Aorta (tissue), 5 donors: ENCODE measurements at regions of chr19 and their contacts with region 1.

Region 1: GRCh38 chr19:44304659-44305193 is at the start of gene ZNF235:
- DNase-seq: peak; percentile 95 to 96
- ATAC-seq: peak; percentile 99
- H3K4me3 ChIP-seq: peak within 1 kb of the TSS; percentile 62 to 76
- H3K27ac ChIP-seq: peak within 1 kb of the TSS in 1 of 2 donors; percentile 65
- H3K4me1 ChIP-seq: no peaks in the 10 kb centered on the region
- H3K27me3 ChIP-seq: no peaks in the 10 kb centered on the region
- total RNA-seq, gene ZNF235: 6.2 to 11.0 TPM

Region 2: DNA sequence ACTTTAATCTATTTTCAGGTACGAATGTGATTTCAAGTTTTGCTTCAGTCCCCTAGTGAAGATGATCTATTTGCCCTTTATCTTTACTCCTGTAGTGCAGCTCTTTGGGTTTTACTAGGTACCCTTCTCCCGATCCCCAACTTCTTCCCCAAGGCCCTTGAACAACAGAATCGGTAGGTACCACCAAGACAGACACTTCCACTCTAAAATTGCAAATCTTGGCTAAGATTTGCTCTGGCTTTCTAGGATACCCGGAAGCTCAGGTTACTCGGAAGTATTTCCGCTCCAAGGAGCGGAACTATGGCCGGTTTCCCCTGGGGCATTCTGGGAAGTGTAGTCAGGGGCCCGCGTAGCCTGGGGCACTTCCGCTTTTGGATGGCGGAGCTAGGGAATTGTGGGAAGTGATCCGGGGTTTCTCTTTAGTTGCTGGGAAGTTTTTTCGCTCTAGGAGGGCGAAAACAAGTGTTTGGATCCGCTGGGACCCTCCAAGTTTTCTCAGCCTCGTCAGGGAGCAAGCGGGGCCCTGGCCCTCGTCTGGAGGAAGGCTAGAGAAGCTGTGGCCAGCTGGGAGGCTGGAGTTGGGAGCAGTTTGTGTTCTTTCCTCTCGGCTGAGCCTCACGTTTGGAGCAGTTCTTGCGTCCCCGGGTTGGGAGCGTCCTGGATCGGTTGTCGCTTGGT is 97.5 kb before region 1 on chr19:
- intact Hi-C with region 1: loop called in 1 of 2 experiments (anchors 5 kb)
- DNase-seq: peak; percentile 92 to 93
- ATAC-seq: peak; percentile 96
- H3K4me3 ChIP-seq: peak overlapping the region; percentile 38 to 42
- H3K27ac ChIP-seq: peak overlapping the region in 1 of 2 donors; percentile 32
- H3K4me1 ChIP-seq: no peaks in the 10 kb centered on the region
- H3K27me3 ChIP-seq: no peaks in the 10 kb centered on the region